ENCODE measurements at regions of chr2 and their contacts with region 1.

Region 1: DNA sequence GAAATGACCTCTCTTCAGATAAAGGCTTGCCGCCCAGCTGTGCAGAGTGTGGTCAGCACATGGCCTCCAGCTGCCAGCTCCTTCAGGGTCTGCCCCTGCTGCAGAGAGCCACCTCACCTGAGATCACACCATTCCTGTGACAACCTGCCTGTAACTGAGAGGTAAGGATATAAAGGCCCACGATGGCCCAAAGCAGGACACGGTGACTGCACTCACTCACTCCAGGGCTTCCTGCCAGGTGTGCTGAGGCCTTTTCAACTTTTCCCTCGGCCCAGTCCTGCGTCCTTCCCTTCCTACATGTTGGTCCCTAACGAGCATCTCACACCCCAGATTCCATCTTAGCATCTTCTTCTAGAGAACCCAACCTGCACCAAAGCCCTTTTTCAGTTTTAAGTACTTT is 36.2 kb downstream of the ANKRD44 start:
- DNase-seq: no peak
- ATAC-seq: peak; percentile 19
- H3K4me3 ChIP-seq: no peak overlapping the region
- H3K4me3 Mint-ChIP-seq: no peak overlapping the region
- H3K27ac ChIP-seq: peak overlapping the region in 1 of 2 donors; percentile 49
- H3K27ac Mint-ChIP-seq: peak overlapping the region; percentile 78
- H3K4me1 ChIP-seq: peaks cover 88% of the 10 kb centered on the region
- H3K4me1 Mint-ChIP-seq: peaks cover 75% of the 10 kb centered on the region
- H3K27me3 ChIP-seq: no peaks in the 10 kb centered on the region
- H3K27me3 Mint-ChIP-seq: no peaks in the 10 kb centered on the region
- CTCF ChIP-seq: no peak

Region 2: DNA sequence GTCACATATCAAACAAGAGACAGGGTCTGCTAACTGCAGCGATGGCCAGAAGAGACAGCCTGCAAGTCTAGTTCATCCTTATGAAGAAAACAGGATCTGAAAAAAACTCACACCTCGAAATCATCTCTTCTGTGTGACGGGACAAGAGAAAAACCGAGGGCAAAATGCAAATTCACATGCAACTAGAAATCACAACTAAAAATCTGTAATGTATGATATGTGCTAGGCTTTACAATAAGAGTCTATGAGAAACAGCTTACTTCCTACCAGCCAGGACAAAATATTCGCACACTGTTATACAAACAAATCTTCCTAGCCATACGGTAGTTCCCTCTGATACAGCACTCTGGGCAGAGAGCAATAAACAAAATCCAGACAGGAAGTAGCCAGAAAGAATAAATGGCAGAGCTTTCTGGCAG is 12.5 kb before region 1 on chr2:
- CTCF ChIA-PET with region 1: no interaction called
- POLR2A ChIA-PET with region 1: interaction called, 5 read pairs
- intact Hi-C with region 1: loop called in 1 of 2 experiments (anchors 2 kb)
- DNase-seq: peak in 2 of 14 experiments; percentile 49 to 52
- ATAC-seq: peak; percentile 38
- H3K4me3 ChIP-seq: no peak overlapping the region
- H3K4me3 Mint-ChIP-seq: peak overlapping the region; percentile 66
- H3K27ac ChIP-seq: peak overlapping the region; percentile 54 to 59
- H3K27ac Mint-ChIP-seq: peak overlapping the region; percentile 78
- H3K4me1 ChIP-seq: peaks cover 69% of the 10 kb centered on the region
- H3K4me1 Mint-ChIP-seq: peaks cover 85% of the 10 kb centered on the region
- H3K27me3 ChIP-seq: no peaks in the 10 kb centered on the region
- H3K27me3 Mint-ChIP-seq: no peaks in the 10 kb centered on the region
- CTCF ChIP-seq: no peak

Measured in CD4-positive, alpha-beta T cell (primary cell).